BJ (cell line): ENCODE measurements at regions of chr9 and their contacts with region 1.

Region 1: DNA sequence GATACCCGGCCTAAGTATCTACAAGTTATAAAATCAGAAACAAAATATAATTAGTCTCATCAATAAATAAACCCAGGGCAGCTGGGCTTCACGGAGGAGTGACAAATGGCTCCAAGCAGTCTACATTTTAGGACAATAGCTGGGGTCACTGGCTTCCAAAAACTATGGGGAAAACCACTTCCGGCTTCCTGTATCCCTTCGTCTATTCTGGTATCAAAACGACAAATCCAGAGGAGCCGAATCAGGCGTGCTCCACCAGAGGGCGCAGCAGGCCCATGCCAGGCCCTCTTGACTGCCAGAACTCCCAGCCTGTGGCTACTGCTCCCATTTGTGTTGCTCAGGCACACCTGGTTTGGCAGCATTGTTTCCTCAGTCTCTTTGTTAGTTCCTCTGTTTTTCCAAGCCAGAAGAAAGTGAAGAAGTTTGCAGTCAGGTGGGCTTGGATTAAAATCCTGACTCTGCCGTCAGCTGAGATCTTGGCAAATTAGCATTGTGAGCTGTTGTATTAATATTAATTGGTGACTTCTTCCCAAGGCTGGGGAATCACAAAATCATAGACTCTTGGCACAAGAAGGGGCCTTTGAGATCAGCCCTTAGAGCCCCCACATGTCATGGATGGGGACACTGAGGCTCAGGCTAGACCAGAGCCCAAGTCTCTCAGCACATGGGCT is 11.6 kb upstream of the RAB14 start:
- DNase-seq: peak; percentile 34
- H3K4me3 ChIP-seq: no peak overlapping the region
- H3K27me3 ChIP-seq: no peaks in the 10 kb centered on the region
- CTCF ChIP-seq: peak; percentile 96

Region 2: GRCh38 chr9:120892748-120893610 is 320.3 kb before region 1 on chr9:
- CTCF ChIA-PET with region 1: no interaction called
- POLR2A ChIA-PET with region 1: no interaction called
- DNase-seq: peak; percentile 56
- H3K4me3 ChIP-seq: no peak overlapping the region
- H3K27me3 ChIP-seq: peaks cover 20% of the 10 kb centered on the region
- CTCF ChIP-seq: no peak

Region 3: DNA sequence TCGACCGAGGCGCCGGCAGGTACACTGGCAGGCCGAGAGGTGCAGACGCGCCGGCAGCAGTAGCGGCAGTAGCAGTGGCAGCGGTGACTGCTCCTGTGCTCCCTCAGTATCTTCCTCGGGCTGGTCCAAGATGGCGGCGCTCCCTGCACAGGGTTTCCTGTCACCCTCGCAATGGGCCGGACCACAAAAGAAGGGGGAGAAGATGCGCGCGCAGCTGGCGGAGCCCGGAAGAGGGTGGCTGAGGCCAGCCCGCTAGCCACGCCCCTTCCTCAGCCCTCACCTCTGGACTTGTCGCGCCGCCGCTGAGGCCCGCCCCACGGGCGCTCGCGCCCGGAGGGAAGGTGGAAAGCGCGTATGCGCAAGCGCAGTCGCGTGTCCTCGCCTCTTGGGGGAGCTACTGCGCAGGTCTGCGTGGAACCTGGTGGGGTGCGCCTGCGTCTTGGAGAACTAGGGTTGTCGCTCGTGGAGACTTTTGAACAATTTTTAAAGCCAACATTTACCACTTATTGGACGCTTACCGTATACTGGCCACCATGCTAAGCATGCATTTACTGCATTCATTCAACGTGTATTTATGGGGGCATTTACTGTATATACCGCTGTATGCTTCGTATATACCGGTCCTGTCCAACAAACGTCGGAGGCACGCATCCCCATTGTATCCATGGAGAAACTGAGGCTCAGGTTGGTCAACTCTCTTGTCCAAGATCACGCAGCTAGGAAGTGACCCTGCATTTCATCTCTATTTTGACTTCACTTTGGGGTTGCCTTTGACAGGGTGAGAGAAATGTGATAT is 11.3 kb before region 1 on chr9 and contains the start of gene RAB14:
- CTCF ChIA-PET with region 1: interaction called, 10 read pairs
- POLR2A ChIA-PET with region 1: interaction called, 3 read pairs
- DNase-seq: peak; percentile 89
- H3K4me3 ChIP-seq: peak within 1 kb of the TSS; percentile 98
- H3K27me3 ChIP-seq: no peaks in the 10 kb centered on the region
- CTCF ChIP-seq: peak; percentile 74
- polyA plus RNA-seq, gene RAB14: 18.3 and 20.0 TPM in 2 replicates

Region 4: GRCh38 chr9:121261107-121261460 is 47.8 kb after region 1 on chr9:
- CTCF ChIA-PET with region 1: interaction called, 15 read pairs
- POLR2A ChIA-PET with region 1: no interaction called
- DNase-seq: no peak
- H3K4me3 ChIP-seq: no peak overlapping the region
- H3K27me3 ChIP-seq: no peaks in the 10 kb centered on the region
- CTCF ChIP-seq: no peak

Region 5: GRCh38 chr9:121278535-121279261 is 65.4 kb after region 1 on chr9:
- CTCF ChIA-PET with region 1: interaction called, 38 read pairs
- POLR2A ChIA-PET with region 1: no interaction called
- DNase-seq: peak; percentile 100
- H3K4me3 ChIP-seq: no peak overlapping the region
- H3K27me3 ChIP-seq: no peaks in the 10 kb centered on the region
- CTCF ChIP-seq: peak; percentile 86

Region 6: DNA sequence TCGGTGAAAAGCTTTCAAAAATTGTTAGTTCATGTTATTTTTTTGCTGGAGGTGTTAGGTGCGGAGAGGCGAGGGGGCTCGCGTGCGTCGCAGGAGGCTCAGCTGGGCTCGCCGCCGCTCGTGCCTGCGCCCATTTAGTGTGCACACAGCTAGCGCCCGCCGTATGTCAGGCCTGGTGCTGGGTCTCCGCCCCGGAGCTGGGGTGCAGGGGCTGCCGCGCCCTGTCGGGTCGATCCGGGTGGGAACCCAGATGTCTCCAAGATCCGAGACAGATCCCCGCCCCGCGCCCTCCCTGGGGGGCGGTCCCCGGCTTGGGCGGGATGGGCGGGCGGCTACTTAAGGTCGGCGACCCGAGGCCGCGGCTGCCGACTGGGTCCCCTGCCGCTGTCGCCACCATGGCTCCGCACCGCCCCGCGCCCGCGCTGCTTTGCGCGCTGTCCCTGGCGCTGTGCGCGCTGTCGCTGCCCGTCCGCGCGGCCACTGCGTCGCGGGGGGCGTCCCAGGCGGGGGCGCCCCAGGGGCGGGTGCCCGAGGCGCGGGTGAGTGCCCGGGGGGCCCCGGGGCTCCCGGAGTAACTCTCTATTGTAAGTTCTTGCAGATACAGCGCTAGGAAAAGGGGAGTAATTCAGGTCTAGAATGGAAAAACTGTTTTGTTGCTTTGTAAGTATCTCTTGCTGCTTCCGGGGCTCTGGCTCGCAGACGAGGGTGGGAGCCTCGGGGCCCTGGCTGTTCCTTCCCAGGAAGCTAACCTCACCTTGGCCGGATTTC is 86.4 kb after region 1 on chr9:
- CTCF ChIA-PET with region 1: interaction called, 15 read pairs
- POLR2A ChIA-PET with region 1: no interaction called
- DNase-seq: no peak
- H3K4me3 ChIP-seq: peak overlapping the region; percentile 35
- H3K27me3 ChIP-seq: no peaks in the 10 kb centered on the region
- CTCF ChIP-seq: no peak

Region 7: DNA sequence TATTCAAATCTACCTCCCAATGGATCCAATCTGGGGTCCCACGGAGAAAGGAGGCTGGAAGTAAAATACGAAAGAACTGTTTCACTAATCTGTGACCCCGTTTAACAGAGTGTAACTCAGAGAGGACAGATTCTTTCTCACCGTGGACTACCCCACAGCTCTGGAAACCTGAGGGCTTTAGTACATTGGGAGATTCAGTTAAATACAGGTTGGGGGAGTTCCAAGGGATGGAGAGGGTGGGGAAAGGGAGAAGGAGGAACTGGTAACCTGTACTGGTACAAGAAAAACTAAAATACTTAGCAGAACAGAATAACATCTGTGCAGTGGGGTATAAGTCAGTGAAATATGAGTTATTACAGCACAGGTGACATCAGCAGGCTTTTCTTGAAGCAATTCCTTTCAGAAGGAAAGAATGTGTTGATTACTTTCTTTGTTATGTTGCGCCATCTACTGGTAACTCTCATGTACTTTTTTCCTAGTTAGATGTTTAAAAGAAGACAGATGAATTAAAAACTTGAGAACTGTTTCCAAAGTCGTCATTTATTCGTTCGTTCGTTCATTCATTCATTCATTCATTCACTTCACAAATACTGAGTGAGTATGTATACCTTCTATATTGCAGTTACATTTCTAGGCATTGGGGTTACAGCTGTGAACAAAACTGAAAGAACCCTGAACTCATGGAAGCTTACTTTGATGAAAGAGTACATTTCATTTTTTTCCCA is 186.8 kb after region 1 on chr9:
- CTCF ChIA-PET with region 1: interaction called, 89 read pairs
- POLR2A ChIA-PET with region 1: no interaction called
- DNase-seq: peak; percentile 51
- H3K4me3 ChIP-seq: no peak overlapping the region
- H3K27me3 ChIP-seq: no peaks in the 10 kb centered on the region
- CTCF ChIP-seq: peak; percentile 48